ENCODE measurements at regions of chr6 and their contacts with region 1.

Region 1: DNA sequence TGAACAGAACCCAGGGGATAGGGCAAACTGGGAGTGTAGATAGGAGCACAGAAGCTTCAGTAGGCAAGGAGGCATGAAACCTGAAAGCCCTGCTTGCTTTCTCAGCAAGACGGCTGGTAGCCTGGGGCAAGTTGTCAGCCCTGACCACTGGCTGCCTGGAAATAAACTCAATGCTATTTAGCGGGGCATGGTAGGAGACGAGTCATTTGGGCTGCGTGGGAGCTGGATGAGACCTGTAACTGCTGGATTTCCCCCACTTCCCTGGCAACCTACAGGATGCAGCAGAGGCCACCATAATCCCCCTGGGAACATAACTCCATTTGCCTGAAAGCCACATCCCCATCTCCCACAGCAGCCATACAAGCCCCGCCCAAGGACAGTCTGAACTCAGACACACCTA is 332.6 kb upstream of the TBX18 start:
- DNase-seq: peak; percentile 9
- H3K4me3 ChIP-seq: no peak overlapping the region
- H3K27ac ChIP-seq: no peak overlapping the region
- H3K4me1 ChIP-seq: no peaks in the 10 kb centered on the region
- H3K27me3 ChIP-seq: no peaks in the 10 kb centered on the region
- CTCF ChIP-seq: no peak

Region 2: GRCh38 chr6:84156306-84156705 is 940.7 kb before region 1 on chr6:
- CTCF ChIA-PET with region 1: no interaction called
- dilution Hi-C with region 1: no loop called
- in situ Hi-C with region 1: no loop called
- intact Hi-C with region 1: loop called (anchors 5 kb)
- DNase-seq: no peak
- H3K4me3 ChIP-seq: no peak overlapping the region
- H3K27ac ChIP-seq: no peak overlapping the region
- H3K4me1 ChIP-seq: no peaks in the 10 kb centered on the region
- H3K27me3 ChIP-seq: no peaks in the 10 kb centered on the region
- CTCF ChIP-seq: no peak

Region 3: GRCh38 chr6:85081102-85081501 is 15.9 kb before region 1 on chr6:
- CTCF ChIA-PET with region 1: no interaction called
- dilution Hi-C with region 1: no loop called
- in situ Hi-C with region 1: no loop called
- intact Hi-C with region 1: no loop called
- DNase-seq: no peak
- H3K4me3 ChIP-seq: no peak overlapping the region
- H3K27ac ChIP-seq: no peak overlapping the region
- H3K4me1 ChIP-seq: peaks cover 13% of the 10 kb centered on the region
- H3K27me3 ChIP-seq: peaks cover under 1% of the 10 kb centered on the region
- CTCF ChIP-seq: no peak

Region 4: DNA sequence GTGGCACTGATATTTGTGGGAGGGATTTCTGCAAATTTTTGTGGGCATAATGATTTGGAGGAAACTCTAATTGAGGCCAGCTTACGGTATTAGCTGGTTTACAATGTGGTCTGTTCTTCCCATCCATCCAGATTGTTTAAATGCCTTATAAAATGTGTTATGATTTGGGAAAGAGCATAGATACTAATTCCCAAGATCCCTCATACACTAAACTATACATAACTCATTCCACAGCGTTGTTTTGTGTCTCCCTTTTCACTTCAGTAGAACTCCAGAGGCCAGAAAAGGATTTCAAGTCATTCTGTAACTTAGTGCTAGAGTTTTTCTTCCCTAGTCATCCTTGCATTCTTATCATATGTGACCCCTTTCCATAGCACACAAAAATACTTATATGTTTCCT is 60.3 kb after region 1 on chr6:
- CTCF ChIA-PET with region 1: no interaction called
- dilution Hi-C with region 1: loop called (anchors 5 kb)
- in situ Hi-C with region 1: no loop called
- intact Hi-C with region 1: no loop called
- DNase-seq: no peak
- H3K4me3 ChIP-seq: no peak overlapping the region
- H3K27ac ChIP-seq: no peak overlapping the region
- H3K4me1 ChIP-seq: no peaks in the 10 kb centered on the region
- H3K27me3 ChIP-seq: peaks cover 2% of the 10 kb centered on the region
- CTCF ChIP-seq: no peak